ENCODE measurements at regions of chr20 and their contacts with region 1.

Region 1: GRCh38 chr20:61331551-61331966 is 79.5 kb downstream of the CDH4 start:
- DNase-seq: peak in 1 of 5 donors; percentile 31
- H3K4me3 ChIP-seq: no peak overlapping the region
- H3K27ac ChIP-seq: no peak overlapping the region
- H3K4me1 ChIP-seq: no peaks in the 10 kb centered on the region
- H3K27me3 ChIP-seq: no peaks in the 10 kb centered on the region
- CTCF ChIP-seq: no peak
- EP300 ChIP-seq: no peak
- POLR2A ChIP-seq: no peak

Region 2: GRCh38 chr20:61146023-61146422 is 185.5 kb before region 1 on chr20:
- intact Hi-C with region 1: no loop called
- DNase-seq: no peak
- H3K4me3 ChIP-seq: no peak overlapping the region
- H3K27ac ChIP-seq: no peak overlapping the region
- H3K4me1 ChIP-seq: no peaks in the 10 kb centered on the region
- H3K27me3 ChIP-seq: no peaks in the 10 kb centered on the region
- CTCF ChIP-seq: no peak
- EP300 ChIP-seq: no peak
- POLR2A ChIP-seq: no peak

Region 3: GRCh38 chr20:61874501-61875026 is 543.0 kb after region 1 on chr20:
- intact Hi-C with region 1: loop called in 1 of 4 experiments (anchors 10 kb)
- DNase-seq: no peak
- H3K4me3 ChIP-seq: no peak overlapping the region
- H3K27ac ChIP-seq: no peak overlapping the region
- H3K4me1 ChIP-seq: no peaks in the 10 kb centered on the region
- H3K27me3 ChIP-seq: no peaks in the 10 kb centered on the region
- CTCF ChIP-seq: no peak
- EP300 ChIP-seq: no peak
- POLR2A ChIP-seq: no peak